ENCODE measurements at regions of chr9 and their contacts with region 1.

Region 1: GRCh38 chr9:33415501-33416038 is 13.2 kb upstream of the AQP7 start:
- DNase-seq: peak; percentile 97 to 98 (median 97)
- H3K4me3 ChIP-seq: peak overlapping the region; percentile 31 to 50
- H3K4me3 Mint-ChIP-seq: peak overlapping the region; percentile 71 to 92 (median 86)
- H3K27ac ChIP-seq: peak overlapping the region; percentile 65
- H3K27ac Mint-ChIP-seq: peak overlapping the region; percentile 92 to 99 (median 98)
- H3K4me1 ChIP-seq: peaks cover 54% of the 10 kb centered on the region
- H3K4me1 Mint-ChIP-seq: peaks cover 38 to 65% (median 57%) of the 10 kb centered on the region in 4 donors
- H3K27me3 ChIP-seq: no peaks in the 10 kb centered on the region
- H3K27me3 Mint-ChIP-seq: no peaks in the 10 kb centered on the region

Region 2: GRCh38 chr9:32787816-32788215 is 627.8 kb before region 1 on chr9:
- CTCF ChIA-PET with region 1: no interaction called
- POLR2A ChIA-PET with region 1: no interaction called
- intact Hi-C with region 1: no loop called
- DNase-seq: no peak
- H3K4me3 ChIP-seq: no peak overlapping the region
- H3K4me3 Mint-ChIP-seq: no peak overlapping the region
- H3K27ac ChIP-seq: no peak overlapping the region
- H3K27ac Mint-ChIP-seq: no peak overlapping the region
- H3K4me1 ChIP-seq: no peaks in the 10 kb centered on the region
- H3K4me1 Mint-ChIP-seq: peaks cover 0 to 2% (median 0%) of the 10 kb centered on the region in 4 donors
- H3K27me3 ChIP-seq: no peaks in the 10 kb centered on the region
- H3K27me3 Mint-ChIP-seq: peaks cover 14 to 21% of the 10 kb centered on the region in 2 donors

Region 3: GRCh38 chr9:33167046-33167808 is 248.3 kb before region 1 on chr9 and contains the start of gene B4GALT1:
- CTCF ChIA-PET with region 1: no interaction called
- POLR2A ChIA-PET with region 1: no interaction called
- intact Hi-C with region 1: no loop called
- DNase-seq: peak; percentile 90 to 94 (median 91)
- H3K4me3 ChIP-seq: peak within 1 kb of the TSS; percentile 56 to 99
- H3K4me3 Mint-ChIP-seq: peak within 1 kb of the TSS; percentile 90 to 95 (median 92)
- H3K27ac ChIP-seq: peak within 1 kb of the TSS; percentile 93
- H3K27ac Mint-ChIP-seq: peak within 1 kb of the TSS; percentile 97 to 99 (median 99)
- H3K4me1 ChIP-seq: peaks cover 48% of the 10 kb centered on the region
- H3K4me1 Mint-ChIP-seq: peaks cover 43 to 59% (median 55%) of the 10 kb centered on the region in 4 donors
- H3K27me3 ChIP-seq: no peaks in the 10 kb centered on the region
- H3K27me3 Mint-ChIP-seq: no peaks in the 10 kb centered on the region
- total RNA-seq, gene B4GALT1: 54.1 to 56.0 TPM

Region 4: GRCh38 chr9:33393581-33393980 is 22.0 kb before region 1 on chr9:
- CTCF ChIA-PET with region 1: no interaction called
- POLR2A ChIA-PET with region 1: no interaction called
- intact Hi-C with region 1: no loop called
- DNase-seq: no peak
- H3K4me3 ChIP-seq: no peak overlapping the region
- H3K4me3 Mint-ChIP-seq: no peak overlapping the region
- H3K27ac ChIP-seq: no peak overlapping the region
- H3K27ac Mint-ChIP-seq: peak overlapping the region in 1 of 7 donors; percentile 44
- H3K4me1 ChIP-seq: no peaks in the 10 kb centered on the region
- H3K4me1 Mint-ChIP-seq: no peaks in the 10 kb centered on the region
- H3K27me3 ChIP-seq: no peaks in the 10 kb centered on the region
- H3K27me3 Mint-ChIP-seq: peaks cover 0 to 6% of the 10 kb centered on the region in 2 donors

Region 5: DNA sequence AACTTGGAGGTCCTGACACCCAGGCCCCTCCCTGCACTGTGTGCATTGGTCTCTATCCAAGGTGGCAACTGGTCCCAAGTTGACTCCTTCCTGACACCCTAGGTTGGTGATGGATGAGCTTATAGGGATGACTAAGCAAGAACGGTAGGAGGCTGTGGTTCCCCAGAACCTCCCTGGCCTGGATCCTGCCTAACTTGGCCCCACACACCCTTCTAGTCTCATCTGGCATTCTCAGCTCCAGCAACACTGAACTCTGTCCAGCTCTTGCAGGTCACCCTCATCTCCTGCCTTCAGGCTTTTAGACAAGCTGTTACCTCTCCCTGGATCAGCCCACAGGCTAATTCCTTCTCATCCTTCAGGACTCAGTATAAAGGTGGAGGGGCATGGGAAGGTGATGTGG is 15.4 kb after region 1 on chr9:
- CTCF ChIA-PET with region 1: interaction called, 12 read pairs
- POLR2A ChIA-PET with region 1: interaction called, 32 read pairs
- intact Hi-C with region 1: no loop called
- DNase-seq: no peak
- H3K4me3 ChIP-seq: no peak overlapping the region
- H3K4me3 Mint-ChIP-seq: no peak overlapping the region
- H3K27ac ChIP-seq: no peak overlapping the region
- H3K27ac Mint-ChIP-seq: peak overlapping the region in 1 of 7 donors; percentile 56
- H3K4me1 ChIP-seq: no peaks in the 10 kb centered on the region
- H3K4me1 Mint-ChIP-seq: peaks cover 5 to 23% (median 13%) of the 10 kb centered on the region in 4 donors
- H3K27me3 ChIP-seq: no peaks in the 10 kb centered on the region
- H3K27me3 Mint-ChIP-seq: no peaks in the 10 kb centered on the region

Region 6: DNA sequence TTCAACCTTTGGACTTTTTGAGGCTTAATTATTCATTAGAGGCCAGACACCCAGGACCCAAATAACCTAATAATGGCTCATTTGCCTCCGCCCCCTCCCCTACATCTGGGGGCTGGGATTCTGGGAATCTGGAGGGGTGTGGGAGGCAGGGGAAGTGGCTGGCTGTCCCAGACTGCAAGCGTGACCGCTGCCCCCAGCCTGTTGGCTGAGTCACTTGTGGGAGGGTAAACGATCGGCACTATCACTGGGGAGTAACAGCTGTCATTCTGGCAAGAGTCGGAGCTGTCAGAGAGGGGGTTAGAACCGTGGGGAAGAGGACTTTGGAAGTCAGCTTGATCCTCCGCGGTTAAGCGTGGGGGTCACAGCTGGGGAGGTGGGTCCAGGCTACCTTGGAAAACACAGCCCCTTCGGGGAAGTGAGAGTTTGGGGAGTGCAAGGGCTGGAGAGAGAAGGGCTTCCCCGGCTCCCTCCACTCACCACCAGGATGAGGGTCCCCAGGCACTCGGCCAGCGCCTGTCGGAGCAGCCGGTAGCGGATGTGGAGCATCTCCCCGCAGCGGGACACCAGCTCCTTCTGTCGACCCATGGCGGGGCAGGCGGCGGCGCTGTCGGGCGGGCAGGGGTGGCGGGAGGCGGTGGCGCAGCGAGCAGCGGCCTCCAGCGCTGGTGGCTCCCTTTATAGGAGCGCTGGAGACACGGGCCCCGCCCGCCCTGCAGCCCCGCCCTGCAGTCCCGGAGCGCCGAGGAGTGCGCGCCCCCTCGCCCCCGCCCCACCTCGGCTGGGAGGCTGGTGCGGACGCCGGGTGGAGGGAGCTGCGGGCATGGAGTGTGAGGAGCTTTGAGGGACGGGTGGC is 31.6 kb after region 1 on chr9 and contains the start of gene AQP3:
- CTCF ChIA-PET with region 1: interaction called, 345 read pairs
- POLR2A ChIA-PET with region 1: interaction called, 219 read pairs
- intact Hi-C with region 1: loop called (anchors 1 kb)
- DNase-seq: peak; percentile 76 to 84 (median 76)
- H3K4me3 ChIP-seq: peak within 1 kb of the TSS; percentile 68 to 73
- H3K4me3 Mint-ChIP-seq: peak within 1 kb of the TSS; percentile 92 to 98 (median 94)
- H3K27ac ChIP-seq: peak within 1 kb of the TSS; percentile 75
- H3K27ac Mint-ChIP-seq: peak within 1 kb of the TSS; percentile 94 to 98 (median 96)
- H3K4me1 ChIP-seq: peaks cover 65% of the 10 kb centered on the region
- H3K4me1 Mint-ChIP-seq: peaks cover 31 to 74% (median 48%) of the 10 kb centered on the region in 4 donors
- H3K27me3 ChIP-seq: no peaks in the 10 kb centered on the region
- H3K27me3 Mint-ChIP-seq: no peaks in the 10 kb centered on the region
- total RNA-seq, gene AQP3: 172 TPM

Region 7: DNA sequence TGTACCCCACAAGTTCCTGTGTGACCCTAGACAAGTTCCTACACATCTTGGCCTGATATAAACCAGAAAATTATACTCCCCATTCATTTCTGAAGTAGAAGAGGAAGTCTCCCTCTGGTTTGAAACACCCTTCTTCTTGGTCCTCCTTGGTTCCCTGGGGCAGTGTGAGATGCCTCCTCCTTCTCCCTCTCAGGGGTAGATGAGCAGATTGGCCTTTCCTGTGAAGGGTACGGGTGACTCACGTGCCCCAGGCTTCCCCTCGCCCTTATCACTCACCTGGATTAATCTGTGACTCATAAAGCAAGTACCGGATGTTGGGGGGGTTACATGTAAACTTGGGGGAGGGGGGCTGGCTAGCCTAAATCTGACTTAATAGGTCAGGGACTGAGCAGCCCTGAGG is 42.9 kb after region 1 on chr9:
- CTCF ChIA-PET with region 1: interaction called, 345 read pairs
- POLR2A ChIA-PET with region 1: interaction called, 83 read pairs
- intact Hi-C with region 1: loop called (anchors 1 kb)
- DNase-seq: peak; percentile 53 to 91 (median 56)
- H3K4me3 ChIP-seq: peak overlapping the region in 1 of 2 donors; percentile 4
- H3K4me3 Mint-ChIP-seq: peak overlapping the region in 7 of 8 donors; percentile 42 to 87 (median 63)
- H3K27ac ChIP-seq: peak overlapping the region; percentile 58
- H3K27ac Mint-ChIP-seq: peak overlapping the region; percentile 88 to 98 (median 94)
- H3K4me1 ChIP-seq: peaks cover 58% of the 10 kb centered on the region
- H3K4me1 Mint-ChIP-seq: peaks cover 36 to 64% (median 53%) of the 10 kb centered on the region in 4 donors
- H3K27me3 ChIP-seq: no peaks in the 10 kb centered on the region
- H3K27me3 Mint-ChIP-seq: no peaks in the 10 kb centered on the region

Region 8: DNA sequence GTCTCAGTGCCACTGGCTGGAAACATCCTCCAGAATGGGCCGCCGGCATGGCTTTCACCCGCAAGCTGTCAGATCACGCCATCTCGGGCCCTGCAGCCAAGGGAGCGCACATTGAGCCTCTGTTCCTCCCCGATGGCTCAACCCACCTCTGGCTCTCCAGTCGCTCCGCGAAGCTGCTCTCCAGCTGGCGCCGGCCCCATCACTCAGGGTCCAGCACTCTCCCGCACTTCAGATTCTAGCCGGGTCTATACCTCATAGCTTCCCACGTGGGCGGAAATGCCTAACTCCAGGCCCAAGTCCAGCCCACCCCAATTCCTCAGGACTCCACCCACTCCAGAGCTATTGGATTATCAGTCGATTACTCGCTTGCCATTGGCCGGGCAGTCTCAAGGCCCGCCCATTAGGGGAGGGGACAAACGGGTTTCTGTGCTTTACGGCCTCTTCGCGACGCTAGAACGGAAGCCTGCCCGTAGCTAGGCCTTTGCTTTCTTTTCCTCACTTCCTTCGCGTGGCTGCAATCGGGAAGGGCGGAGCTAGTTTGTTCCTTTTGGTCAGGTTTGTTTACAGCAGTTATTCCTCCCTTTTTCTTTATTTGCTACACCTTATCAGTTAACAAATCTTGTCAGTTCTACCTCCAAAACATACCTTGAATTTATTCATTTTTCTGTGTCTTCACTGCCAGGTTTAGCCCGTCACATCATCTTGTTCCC is 58.2 kb after region 1 on chr9 and contains the start of gene NOL6:
- CTCF ChIA-PET with region 1: interaction called, 113 read pairs
- POLR2A ChIA-PET with region 1: interaction called, 58 read pairs
- intact Hi-C with region 1: loop called (anchors 1 kb)
- DNase-seq: peak; percentile 98 to 99 (median 98)
- H3K4me3 ChIP-seq: peak within 1 kb of the TSS; percentile 80 to 93
- H3K4me3 Mint-ChIP-seq: peak within 1 kb of the TSS; percentile 95 to 100 (median 99)
- H3K27ac ChIP-seq: peak within 1 kb of the TSS; percentile 62
- H3K27ac Mint-ChIP-seq: peak within 1 kb of the TSS; percentile 90 to 100 (median 97)
- H3K4me1 ChIP-seq: peaks cover 27% of the 10 kb centered on the region
- H3K4me1 Mint-ChIP-seq: peaks cover 11 to 36% (median 28%) of the 10 kb centered on the region in 4 donors
- H3K27me3 ChIP-seq: no peaks in the 10 kb centered on the region
- H3K27me3 Mint-ChIP-seq: no peaks in the 10 kb centered on the region
- total RNA-seq, gene NOL6: 39.1 to 41.1 TPM